Activated CD4-positive, alpha-beta memory T cell treated with anti-CD3 and anti-CD28 coated beads for 36 hours (primary cell): ENCODE measurements at regions of chr14 and their contacts with region 1.

Region 1: GRCh38 chr14:90697577-90698206 is 118.5 kb downstream of the TTC7B start:
- DNase-seq: peak; percentile 84
- H3K4me3 Mint-ChIP-seq: no peak overlapping the region
- H3K27ac Mint-ChIP-seq: no peak overlapping the region
- H3K4me1 Mint-ChIP-seq: no peaks in the 10 kb centered on the region
- H3K27me3 Mint-ChIP-seq: no peaks in the 10 kb centered on the region

Region 2: DNA sequence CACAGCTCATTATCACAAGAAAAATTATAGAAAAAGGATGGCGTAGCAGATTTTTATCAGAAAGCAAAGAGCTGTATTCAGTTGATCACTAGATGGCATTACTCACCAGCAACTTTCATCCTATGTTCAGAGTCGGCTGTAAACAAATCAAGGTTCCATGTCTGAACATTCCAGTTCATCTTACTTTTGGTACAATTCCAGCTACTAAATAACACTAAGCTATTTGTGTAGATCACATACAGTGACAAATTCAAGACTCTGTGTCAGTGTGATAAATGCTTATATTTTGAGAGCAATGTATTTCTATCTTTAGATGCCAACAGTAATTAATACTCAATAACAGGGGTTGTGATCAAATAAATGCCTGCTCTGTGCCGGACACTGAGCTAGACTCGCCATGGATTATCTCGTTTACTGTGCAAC is 396.0 kb before region 1 on chr14:
- CTCF ChIA-PET with region 1: interaction called, 17 read pairs
- POLR2A ChIA-PET with region 1: no interaction called
- intact Hi-C with region 1: loop called (anchors 5 kb)
- DNase-seq: no peak
- H3K4me3 Mint-ChIP-seq: no peak overlapping the region
- H3K27ac Mint-ChIP-seq: no peak overlapping the region
- H3K4me1 Mint-ChIP-seq: peaks cover 10% of the 10 kb centered on the region
- H3K27me3 Mint-ChIP-seq: no peaks in the 10 kb centered on the region

Region 3: DNA sequence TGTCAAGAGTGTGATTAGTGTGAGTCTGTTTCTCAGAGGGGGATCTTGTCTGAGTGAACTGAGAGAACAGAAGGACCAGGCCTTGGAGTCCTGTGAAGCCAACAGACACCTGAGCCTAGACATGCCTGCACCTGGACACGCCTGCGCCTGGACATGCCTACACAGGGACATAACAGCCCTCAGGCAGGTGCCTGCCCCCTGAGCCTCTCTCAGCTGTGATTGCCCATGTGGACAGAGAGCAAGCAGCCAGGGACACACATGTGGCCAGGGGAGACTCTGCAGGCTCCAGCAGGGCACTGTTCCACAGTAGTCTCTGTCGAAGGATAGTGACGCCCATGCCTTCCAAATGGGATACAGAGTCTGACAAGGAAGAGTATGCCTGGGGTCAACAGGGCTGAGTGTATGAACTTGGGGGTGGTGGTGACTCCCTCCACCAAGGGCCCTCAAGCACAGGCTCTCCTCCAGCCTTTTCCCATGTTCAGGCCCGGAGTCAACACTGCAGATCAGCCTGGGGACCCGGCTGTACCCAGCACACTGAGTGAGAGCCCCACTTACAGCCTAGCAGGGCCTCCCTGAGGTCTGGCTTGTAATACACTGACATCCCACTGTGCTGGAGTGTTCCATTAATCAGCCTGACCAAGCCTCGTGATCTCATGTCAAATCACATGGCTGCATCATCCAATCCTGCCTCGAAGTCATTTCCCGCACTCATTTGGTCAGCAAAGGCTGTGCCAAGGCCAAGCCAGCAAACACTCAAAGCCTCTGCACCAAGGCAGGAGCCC is 127.9 kb before region 1 on chr14:
- CTCF ChIA-PET with region 1: interaction called, 13 read pairs
- POLR2A ChIA-PET with region 1: no interaction called
- intact Hi-C with region 1: no loop called
- DNase-seq: no peak
- H3K4me3 Mint-ChIP-seq: no peak overlapping the region
- H3K27ac Mint-ChIP-seq: no peak overlapping the region
- H3K4me1 Mint-ChIP-seq: no peaks in the 10 kb centered on the region
- H3K27me3 Mint-ChIP-seq: no peaks in the 10 kb centered on the region

Region 4: GRCh38 chr14:90687680-90688079 is 10.0 kb before region 1 on chr14:
- CTCF ChIA-PET with region 1: interaction called, 11 read pairs
- POLR2A ChIA-PET with region 1: interaction called, 3 read pairs
- intact Hi-C with region 1: no loop called
- DNase-seq: no peak
- H3K4me3 Mint-ChIP-seq: no peak overlapping the region
- H3K27ac Mint-ChIP-seq: no peak overlapping the region
- H3K4me1 Mint-ChIP-seq: no peaks in the 10 kb centered on the region
- H3K27me3 Mint-ChIP-seq: no peaks in the 10 kb centered on the region